Ascending aorta (tissue), 2 donors: ENCODE measurements at regions of chr10 and their contacts with region 1.

Region 1: GRCh38 chr10:114520453-114520852 is 116.2 kb upstream of the AFAP1L2 start:
- DNase-seq: peak in 1 of 2 donors; percentile 69
- H3K4me3 ChIP-seq: no peak overlapping the region
- H3K27ac ChIP-seq: peak overlapping the region; percentile 12 to 46
- H3K4me1 ChIP-seq: peaks cover 0 to 6% of the 10 kb centered on the region in 2 donors
- H3K27me3 ChIP-seq: no peaks in the 10 kb centered on the region
- CTCF ChIP-seq: no peak

Region 2: GRCh38 chr10:114504769-114505579 is 15.5 kb before region 1 on chr10:
- intact Hi-C with region 1: loop called (anchors 2 kb)
- DNase-seq: peak in 1 of 2 donors; percentile 74
- H3K4me3 ChIP-seq: no peak overlapping the region
- H3K27ac ChIP-seq: peak overlapping the region; percentile 47 to 54
- H3K4me1 ChIP-seq: peaks cover 0 to 20% of the 10 kb centered on the region in 2 donors
- H3K27me3 ChIP-seq: no peaks in the 10 kb centered on the region
- CTCF ChIP-seq: no peak